Activated naive CD8-positive, alpha-beta T cell treated with anti-CD3 and anti-CD28 coated beads, Interleukin-2, amount 10 ng/mL, durations not matched to agents 7 days and 5 days (primary cell): ENCODE measurements at regions of chr20 and their contacts with region 1.

Region 1: GRCh38 chr20:38805502-38805957 is at the start of gene PPP1R16B:
- DNase-seq: peak; percentile 92
- ATAC-seq: peak; percentile 83
- H3K4me3 Mint-ChIP-seq: peak within 1 kb of the TSS; percentile 88
- H3K27ac Mint-ChIP-seq: peak within 1 kb of the TSS; percentile 95
- H3K4me1 Mint-ChIP-seq: peaks cover 58% of the 10 kb centered on the region
- H3K27me3 Mint-ChIP-seq: no peaks in the 10 kb centered on the region
- total RNA-seq, gene PPP1R16B: 72.9 to 73.4 TPM

Region 2: DNA sequence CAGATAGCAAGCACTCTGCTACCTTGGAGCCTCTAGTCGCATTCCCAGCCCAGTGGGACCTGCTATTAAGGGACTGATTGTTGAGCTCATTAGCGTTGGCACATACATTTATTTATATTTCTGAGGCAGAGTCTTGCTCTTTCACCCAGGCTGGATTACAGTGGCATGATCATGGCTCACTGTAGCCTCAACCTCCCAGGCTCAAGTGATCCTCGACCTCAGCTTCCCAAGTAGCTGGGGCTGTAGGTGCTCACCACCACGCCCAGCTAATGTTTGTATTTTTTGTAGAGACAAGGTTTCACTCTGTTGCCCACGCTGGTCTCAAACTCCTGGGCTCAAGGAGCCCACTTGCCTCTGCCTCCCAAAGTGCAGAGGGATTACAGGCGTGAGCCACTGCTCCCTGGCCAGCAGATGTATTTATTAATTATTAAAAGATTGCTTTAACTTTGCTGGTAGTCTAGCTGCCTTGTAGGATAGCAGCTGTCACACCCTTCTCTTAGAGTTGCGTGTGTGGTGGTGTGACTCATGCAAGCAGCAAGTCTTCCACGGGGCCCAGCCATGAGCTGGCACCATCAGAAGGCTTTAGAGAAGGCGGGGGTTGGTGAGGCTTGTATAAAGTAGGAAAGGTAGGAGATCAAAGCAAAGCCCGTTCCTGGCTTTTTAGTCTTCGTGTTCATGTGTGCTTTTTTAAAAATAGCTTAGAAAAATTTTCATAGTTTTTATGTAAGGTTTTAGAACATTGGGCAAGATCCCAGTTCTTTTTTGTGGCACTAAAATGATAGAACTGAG is 40.8 kb before region 1 on chr20:
- POLR2A ChIA-PET with region 1: no interaction called
- DNase-seq: no peak
- ATAC-seq: peak; percentile 73
- H3K4me3 Mint-ChIP-seq: no peak overlapping the region
- H3K27ac Mint-ChIP-seq: no peak overlapping the region
- H3K4me1 Mint-ChIP-seq: peaks cover 7% of the 10 kb centered on the region
- H3K27me3 Mint-ChIP-seq: no peaks in the 10 kb centered on the region

Region 3: DNA sequence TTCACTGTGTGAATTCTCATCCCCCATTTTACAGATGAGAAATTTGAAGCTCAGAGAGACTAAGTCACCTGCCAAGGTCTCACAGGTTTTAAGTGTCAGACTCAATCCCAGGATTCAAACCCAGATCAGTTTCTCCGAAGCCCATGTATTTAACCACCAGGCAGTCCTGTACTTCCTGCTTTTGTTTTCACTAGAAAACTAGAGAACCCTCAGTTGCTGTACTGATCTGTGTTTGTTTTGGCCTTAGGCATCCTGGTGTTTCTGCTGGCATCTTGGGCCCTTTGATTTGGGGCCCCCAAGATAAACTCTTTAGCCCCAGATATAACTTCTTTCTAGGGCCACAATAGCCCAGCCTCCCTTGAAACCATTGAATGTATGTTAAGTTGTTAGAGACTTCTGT is 36.5 kb after region 1 on chr20:
- POLR2A ChIA-PET with region 1: interaction called, 10 read pairs
- DNase-seq: no peak
- ATAC-seq: peak; percentile 66
- H3K4me3 Mint-ChIP-seq: peak overlapping the region; percentile 72
- H3K27ac Mint-ChIP-seq: peak overlapping the region; percentile 83
- H3K4me1 Mint-ChIP-seq: peaks cover 54% of the 10 kb centered on the region
- H3K27me3 Mint-ChIP-seq: no peaks in the 10 kb centered on the region

Region 4: DNA sequence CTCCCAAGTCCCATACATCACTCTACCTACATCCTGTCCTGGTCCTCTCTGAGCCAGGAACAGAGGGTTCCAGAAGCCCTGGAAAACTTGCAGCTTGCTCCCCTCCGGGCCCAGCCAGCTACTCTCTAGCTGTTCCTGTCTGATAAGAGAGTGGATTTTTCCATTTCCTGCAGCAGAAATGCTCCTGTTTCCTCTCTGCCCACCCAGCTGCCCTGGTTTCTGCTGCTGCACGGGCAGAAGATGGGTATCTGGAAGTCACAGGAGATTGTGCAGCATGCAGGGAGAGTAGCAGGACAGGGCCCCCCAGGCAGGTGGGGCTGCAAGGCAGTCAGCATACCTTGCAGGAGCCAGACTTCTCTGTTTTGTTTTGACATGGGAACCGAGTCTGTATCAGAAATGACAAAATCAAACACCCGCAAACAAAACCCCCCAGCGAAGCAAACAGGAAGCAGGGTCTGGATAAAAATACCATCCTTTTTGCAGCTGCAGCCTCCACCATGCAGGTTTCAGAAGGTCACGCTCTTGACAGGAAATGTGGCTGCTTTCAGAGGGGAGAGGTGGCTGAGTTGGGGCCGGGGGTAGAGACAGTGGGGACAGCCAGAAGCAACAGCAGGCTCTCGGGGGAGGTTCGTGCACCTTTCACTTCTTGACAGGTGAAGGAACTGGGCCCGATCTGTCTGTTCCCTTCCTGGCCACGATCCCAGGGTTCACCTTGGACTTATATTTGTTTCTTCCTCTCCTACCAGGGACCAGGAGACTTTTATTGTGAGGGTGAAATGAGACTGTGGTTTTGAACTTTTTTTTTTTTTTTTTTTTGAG is 69.9 kb after region 1 on chr20:
- POLR2A ChIA-PET with region 1: interaction called, 38 read pairs
- DNase-seq: peak; percentile 66
- ATAC-seq: peak; percentile 55
- H3K4me3 Mint-ChIP-seq: peak overlapping the region; percentile 76
- H3K27ac Mint-ChIP-seq: peak overlapping the region; percentile 87
- H3K4me1 Mint-ChIP-seq: peaks cover 72% of the 10 kb centered on the region
- H3K27me3 Mint-ChIP-seq: no peaks in the 10 kb centered on the region

Region 5: DNA sequence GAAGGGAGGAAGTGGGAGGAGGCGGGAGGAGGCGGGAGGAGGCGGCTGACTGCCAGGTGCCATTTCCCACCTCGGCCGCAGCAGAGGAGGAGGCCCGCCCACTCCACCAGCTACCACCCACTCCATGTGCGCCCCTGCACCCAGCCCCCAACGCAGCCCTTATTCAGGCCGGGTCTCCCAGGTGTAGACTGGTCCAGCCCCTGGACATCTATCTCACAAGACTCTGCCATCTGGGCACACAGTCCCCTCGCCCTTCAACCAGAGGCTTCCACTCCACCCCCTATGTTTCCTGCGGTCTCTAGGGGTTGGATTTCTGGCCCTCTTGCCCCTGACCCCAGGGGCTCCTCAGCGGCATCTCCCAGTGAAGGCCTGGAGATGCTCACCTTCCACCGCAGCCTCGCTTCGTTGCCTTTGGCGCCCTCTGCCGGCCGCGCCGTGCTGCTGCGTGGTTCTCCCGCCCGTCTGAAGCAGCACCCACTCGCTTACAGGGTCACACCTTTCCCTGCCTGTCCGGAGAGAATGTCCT is 88.1 kb after region 1 on chr20:
- POLR2A ChIA-PET with region 1: interaction called, 15 read pairs
- DNase-seq: peak; percentile 84
- ATAC-seq: peak; percentile 83
- H3K4me3 Mint-ChIP-seq: peak overlapping the region; percentile 59
- H3K27ac Mint-ChIP-seq: peak overlapping the region; percentile 81
- H3K4me1 Mint-ChIP-seq: peaks cover 27% of the 10 kb centered on the region
- H3K27me3 Mint-ChIP-seq: no peaks in the 10 kb centered on the region